Mammary epithelial cell (primary cell): ENCODE measurements at regions of chr3 and their contacts with region 1.

Region 1: DNA sequence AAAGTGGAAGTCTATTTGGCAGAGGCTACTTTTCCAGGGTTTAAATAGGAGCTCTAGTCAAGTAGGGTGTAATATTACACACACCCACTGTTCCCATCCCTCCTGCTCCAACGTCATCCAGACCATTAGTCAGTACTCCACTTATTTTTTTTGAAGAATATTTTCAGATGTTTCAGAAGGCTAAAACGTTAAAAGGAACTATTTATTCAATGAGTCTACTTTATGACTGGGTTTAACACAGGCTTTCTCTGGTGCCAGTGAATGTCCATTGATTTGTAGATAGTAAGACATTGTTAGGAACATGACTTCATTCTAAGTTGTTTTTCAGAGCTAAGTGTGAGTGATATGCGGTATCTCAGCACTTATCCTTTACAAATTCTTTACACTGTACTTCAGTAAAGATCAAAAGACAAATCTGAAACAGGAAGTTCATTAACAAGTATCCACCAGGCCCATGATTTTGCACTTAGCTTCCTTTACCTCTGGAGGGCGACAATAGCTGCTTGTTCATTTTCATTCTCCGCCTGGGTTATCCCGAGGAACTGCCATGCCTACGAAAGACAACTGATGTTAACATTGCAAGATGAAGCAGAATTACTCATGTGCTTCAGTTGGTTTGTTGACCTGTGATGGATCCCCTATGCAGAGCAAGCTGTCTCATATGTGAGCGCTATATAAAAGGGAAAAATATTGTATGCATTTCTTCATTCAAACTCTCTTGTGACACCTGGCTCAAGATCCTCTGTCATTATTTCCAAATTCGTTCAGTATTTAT is 158.7 kb downstream of the USP13 start:
- DNase-seq: peak; percentile 75
- H3K4me3 ChIP-seq: no peak overlapping the region
- H3K27ac ChIP-seq: peak overlapping the region; percentile 33
- H3K4me1 ChIP-seq: no peaks in the 10 kb centered on the region
- H3K27me3 ChIP-seq: no peaks in the 10 kb centered on the region
- CTCF ChIP-seq: peak; percentile 72 to 83

Region 2: DNA sequence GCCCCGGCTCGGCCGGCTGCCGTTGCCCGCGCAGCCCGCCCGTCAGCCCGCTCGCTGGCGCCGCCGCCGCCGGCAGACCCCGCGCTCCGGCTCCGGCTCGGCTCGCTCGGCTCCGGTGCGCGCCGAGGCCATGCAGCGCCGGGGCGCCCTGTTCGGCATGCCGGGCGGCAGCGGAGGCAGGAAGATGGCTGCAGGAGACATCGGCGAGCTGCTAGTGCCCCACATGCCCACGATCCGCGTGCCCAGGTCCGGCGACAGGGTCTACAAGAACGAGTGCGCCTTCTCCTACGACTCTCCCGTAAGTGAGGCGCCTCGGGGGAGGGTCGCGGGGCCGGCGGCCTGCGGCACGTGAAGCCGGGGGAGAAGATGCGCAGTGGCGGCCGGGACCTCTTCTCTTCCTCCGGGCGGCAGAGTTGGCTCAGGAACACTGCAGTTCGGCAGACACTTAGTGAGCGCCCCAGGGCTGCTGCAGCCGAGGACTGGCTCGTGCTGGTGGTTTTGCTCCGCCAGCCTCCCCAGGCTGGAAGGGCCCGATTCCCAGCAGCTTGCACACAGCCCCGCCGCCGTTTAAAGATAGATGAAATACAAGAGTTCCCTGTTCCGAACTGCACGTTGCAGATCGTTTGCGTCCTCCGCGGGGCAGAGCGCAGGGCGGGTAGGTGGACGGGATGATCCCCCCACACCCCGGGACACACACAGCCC is 158.3 kb before region 1 on chr3:
- CTCF ChIA-PET with region 1: no interaction called
- dilution Hi-C with region 1: no loop called
- in situ Hi-C with region 1: no loop called
- intact Hi-C with region 1: loop called (anchors 2 kb)
- DNase-seq: peak; percentile 82
- H3K4me3 ChIP-seq: peak overlapping the region; percentile 53 to 88 (median 68)
- H3K27ac ChIP-seq: peak overlapping the region; percentile 12
- H3K4me1 ChIP-seq: peaks cover 6% of the 10 kb centered on the region
- H3K27me3 ChIP-seq: no peaks in the 10 kb centered on the region
- CTCF ChIP-seq: peak in 1 of 2 donors; percentile 12

Region 3: DNA sequence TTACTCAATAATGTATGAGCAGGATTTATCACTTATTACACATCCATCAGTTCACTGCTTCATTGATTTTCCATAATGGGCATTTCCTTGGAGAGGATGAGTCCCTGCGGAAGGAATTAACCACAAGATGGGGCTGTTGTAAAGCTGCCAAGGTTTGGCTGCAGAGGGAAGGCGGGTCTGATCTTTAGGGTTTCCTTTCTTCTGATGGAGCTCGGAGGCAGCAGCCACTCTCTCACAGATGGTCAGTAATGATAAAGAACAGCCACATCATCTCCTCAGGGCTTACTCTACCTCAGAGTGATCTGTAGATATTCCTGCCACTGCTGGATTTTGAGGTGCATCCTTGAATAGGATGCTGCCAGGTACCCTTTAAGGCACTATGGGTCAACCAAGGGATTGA is 43.4 kb before region 1 on chr3:
- CTCF ChIA-PET with region 1: no interaction called
- dilution Hi-C with region 1: no loop called
- in situ Hi-C with region 1: no loop called
- intact Hi-C with region 1: loop called (anchors 2 kb)
- DNase-seq: peak; percentile 47
- H3K4me3 ChIP-seq: no peak overlapping the region
- H3K27ac ChIP-seq: no peak overlapping the region
- H3K4me1 ChIP-seq: no peaks in the 10 kb centered on the region
- H3K27me3 ChIP-seq: no peaks in the 10 kb centered on the region
- CTCF ChIP-seq: peak; percentile 61 to 73

Region 4: DNA sequence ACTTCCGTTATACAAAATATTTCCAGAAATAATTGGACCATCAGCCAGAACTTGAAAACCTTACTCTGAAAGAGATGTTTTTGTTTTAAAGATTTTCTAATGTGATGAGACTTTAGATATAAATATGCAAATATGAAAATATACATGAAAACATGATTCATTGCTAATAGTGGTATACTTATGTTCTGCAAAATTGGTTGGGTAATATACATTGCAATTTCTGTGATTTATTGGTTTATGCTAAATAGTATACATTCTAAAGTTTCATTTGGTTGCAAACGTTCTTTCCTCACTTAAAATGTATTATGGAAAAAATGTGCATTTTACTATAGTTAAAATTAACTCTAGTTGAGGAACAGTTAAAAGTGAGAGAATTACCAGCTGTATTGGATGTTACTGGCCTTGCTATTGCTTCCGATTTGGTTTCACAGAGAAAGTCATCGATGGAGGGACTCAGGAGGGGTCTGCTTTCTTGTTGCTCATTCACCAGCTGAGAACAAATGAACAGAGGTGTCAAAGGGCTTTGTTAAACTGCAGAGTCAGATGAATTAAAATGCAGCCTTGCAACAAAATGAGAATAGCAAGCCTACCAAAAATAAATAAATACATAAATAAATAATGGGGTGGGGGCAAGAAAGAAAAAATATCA is 75.9 kb after region 1 on chr3:
- CTCF ChIA-PET with region 1: no interaction called
- dilution Hi-C with region 1: no loop called
- in situ Hi-C with region 1: no loop called
- intact Hi-C with region 1: no loop called
- DNase-seq: no peak
- H3K4me3 ChIP-seq: no peak overlapping the region
- H3K27ac ChIP-seq: no peak overlapping the region
- H3K4me1 ChIP-seq: no peaks in the 10 kb centered on the region
- H3K27me3 ChIP-seq: no peaks in the 10 kb centered on the region
- CTCF ChIP-seq: no peak

Region 5: DNA sequence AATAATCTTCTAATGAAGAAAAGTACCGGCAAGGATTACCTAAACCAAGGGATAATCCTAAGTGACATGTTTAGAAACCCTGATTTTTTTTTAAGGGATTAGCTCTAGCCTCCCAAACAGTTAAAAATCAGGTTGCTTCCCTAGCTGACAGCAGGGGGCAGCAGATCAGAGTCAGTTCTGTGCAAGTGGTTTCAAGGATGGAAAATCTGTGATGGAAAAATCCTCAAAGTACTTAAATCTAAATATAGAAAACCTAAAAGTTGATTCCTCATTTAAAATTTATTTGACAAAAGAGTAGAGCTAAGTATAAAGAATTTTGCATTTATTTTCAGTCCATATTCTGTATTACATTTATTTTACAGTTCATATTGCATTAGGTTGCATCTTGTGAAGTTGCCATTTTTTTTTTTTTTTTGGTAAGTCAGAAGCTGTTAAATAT is 117.6 kb after region 1 on chr3:
- CTCF ChIA-PET with region 1: interaction called, 6 read pairs
- dilution Hi-C with region 1: no loop called
- in situ Hi-C with region 1: no loop called
- intact Hi-C with region 1: loop called (anchors 1 kb)
- DNase-seq: peak; percentile 30
- H3K4me3 ChIP-seq: no peak overlapping the region
- H3K27ac ChIP-seq: no peak overlapping the region
- H3K4me1 ChIP-seq: no peaks in the 10 kb centered on the region
- H3K27me3 ChIP-seq: no peaks in the 10 kb centered on the region
- CTCF ChIP-seq: peak; percentile 78 to 81

Region 6: GRCh38 chr3:180601688-180602666 is 790.5 kb after region 1 on chr3 and contains the start of gene TTC14:
- CTCF ChIA-PET with region 1: no interaction called
- dilution Hi-C with region 1: no loop called
- in situ Hi-C with region 1: loop called (anchors 5 to 10 kb)
- intact Hi-C with region 1: loop called (anchors 2 kb)
- DNase-seq: peak; percentile 95
- H3K4me3 ChIP-seq: peak within 1 kb of the TSS; percentile 93 to 99 (median 96)
- H3K27ac ChIP-seq: peak within 1 kb of the TSS; percentile 52
- H3K4me1 ChIP-seq: peaks cover 7% of the 10 kb centered on the region
- H3K27me3 ChIP-seq: no peaks in the 10 kb centered on the region
- CTCF ChIP-seq: no peak
- total RNA-seq, gene TTC14: 31.0 to 37.0 TPM

Region 7: DNA sequence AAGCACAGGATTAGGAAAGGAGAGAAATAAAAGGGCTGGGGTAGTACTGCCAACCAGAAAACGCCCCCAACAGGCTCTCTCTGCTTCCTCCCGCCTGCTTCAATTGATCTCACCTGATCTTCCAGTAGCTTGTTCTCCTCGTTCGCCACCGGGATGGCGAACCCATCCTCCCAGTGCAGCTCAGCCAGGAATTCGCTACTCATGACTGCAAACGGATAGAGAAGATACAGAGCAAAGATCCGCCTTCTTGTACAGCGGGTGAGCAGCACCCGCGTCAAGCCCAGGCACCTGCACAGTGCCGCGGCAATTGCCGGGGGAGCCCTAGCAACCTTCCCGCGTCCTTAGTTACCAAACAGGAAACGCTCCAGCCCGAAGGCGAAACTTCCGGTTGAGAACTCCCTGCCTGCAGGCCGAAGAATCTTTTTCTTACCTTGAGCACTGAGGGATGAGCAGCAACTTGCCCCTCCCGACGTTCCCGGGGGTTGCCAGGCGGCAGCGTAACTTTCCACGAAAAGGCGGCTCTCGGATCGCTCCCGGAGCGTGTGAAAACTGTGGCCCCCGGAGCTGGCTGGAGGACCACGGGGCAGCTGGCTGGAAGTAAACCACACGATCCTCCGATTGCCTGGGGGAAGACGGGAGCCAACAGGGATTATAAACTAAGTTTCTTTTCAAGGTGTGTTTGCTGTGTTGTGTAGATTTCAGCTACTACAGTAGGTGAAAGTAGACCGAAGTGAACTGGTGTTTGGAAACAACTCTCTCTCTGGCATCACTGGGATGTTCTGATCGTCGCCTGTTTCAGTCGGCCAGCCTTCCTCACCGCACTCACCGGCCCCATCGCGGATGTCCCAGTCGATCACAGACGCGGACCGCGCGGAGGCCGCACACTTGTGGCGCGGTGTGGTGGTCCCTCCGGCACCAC is 867.9 kb after region 1 on chr3 and contains the start of gene CCDC39:
- CTCF ChIA-PET with region 1: no interaction called
- dilution Hi-C with region 1: no loop called
- in situ Hi-C with region 1: no loop called
- intact Hi-C with region 1: loop called (anchors 1 kb)
- DNase-seq: peak; percentile 83
- H3K4me3 ChIP-seq: peak within 1 kb of the TSS; percentile 45 to 69 (median 62)
- H3K27ac ChIP-seq: peak within 1 kb of the TSS; percentile 50
- H3K4me1 ChIP-seq: peaks cover 7% of the 10 kb centered on the region
- H3K27me3 ChIP-seq: no peaks in the 10 kb centered on the region
- CTCF ChIP-seq: no peak
- total RNA-seq, gene CCDC39: 0.26 TPM in 1 of 2 donors, not detected in the other